Caco-2 (cell line): ENCODE measurements at regions of chr11 and their contacts with region 1.

Region 1: GRCh38 chr11:46554205-46555055 is 39.4 kb downstream of the AMBRA1 start:
- DNase-seq: peak; percentile 72 to 86
- H3K4me3 ChIP-seq: no peak overlapping the region
- H3K4me3 Mint-ChIP-seq: peak overlapping the region; percentile 74
- H3K27ac Mint-ChIP-seq: peak overlapping the region; percentile 77
- H3K4me1 ChIP-seq: peaks cover 47% of the 10 kb centered on the region
- H3K4me1 Mint-ChIP-seq: peaks cover 32% of the 10 kb centered on the region
- H3K27me3 ChIP-seq: no peaks in the 10 kb centered on the region
- H3K27me3 Mint-ChIP-seq: no peaks in the 10 kb centered on the region
- CTCF ChIP-seq: no peak

Region 2: DNA sequence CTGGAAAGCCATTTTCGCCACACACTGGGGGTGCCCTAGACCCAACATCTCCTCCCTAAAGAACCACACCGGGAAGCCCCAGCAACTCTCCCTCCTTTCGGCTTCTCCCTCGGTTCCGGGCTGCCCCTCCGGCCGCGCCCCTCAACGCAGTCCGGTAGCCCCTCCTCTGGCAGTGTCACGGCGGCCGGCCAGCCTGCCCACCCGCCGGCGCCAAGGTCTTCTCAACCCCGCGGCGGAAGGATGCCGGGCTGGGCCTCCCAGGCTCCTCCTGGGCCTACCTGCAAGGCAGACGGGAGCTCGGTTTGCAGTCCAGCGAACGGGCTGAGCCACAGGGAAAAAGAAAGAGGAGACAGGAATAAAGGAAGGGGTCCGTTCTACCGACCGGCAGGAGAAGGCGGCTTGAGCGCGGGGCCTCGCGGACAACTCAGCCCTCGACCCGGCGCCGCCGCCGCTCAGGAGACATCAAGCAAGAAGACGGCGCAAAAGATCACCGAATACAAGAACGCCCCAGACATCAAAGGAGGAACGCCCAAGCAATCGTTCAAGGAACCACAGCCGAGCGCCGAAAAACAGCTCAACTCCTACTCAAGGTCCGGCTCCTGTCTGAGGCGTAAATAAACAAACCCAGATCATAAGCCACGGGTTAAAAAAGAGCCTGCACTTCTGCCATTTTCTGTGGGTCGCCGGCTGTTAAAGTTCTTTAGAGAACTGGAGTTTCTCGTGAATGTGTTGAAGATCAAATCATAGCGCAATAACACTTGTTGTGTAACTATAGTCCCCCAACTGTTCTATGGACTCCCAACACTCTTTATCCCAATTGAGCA is 39.3 kb after region 1 on chr11 and contains the start of gene AMBRA1:
- CTCF ChIA-PET with region 1: no interaction called
- POLR2A ChIA-PET with region 1: interaction called, 11 read pairs
- intact Hi-C with region 1: loop called (anchors 1 kb)
- DNase-seq: peak; percentile 93
- H3K4me3 ChIP-seq: peak within 1 kb of the TSS; percentile 79
- H3K4me3 Mint-ChIP-seq: peak within 1 kb of the TSS; percentile 96
- H3K27ac Mint-ChIP-seq: peak within 1 kb of the TSS; percentile 91
- H3K4me1 ChIP-seq: peaks cover 42% of the 10 kb centered on the region
- H3K4me1 Mint-ChIP-seq: peaks cover 24% of the 10 kb centered on the region
- H3K27me3 ChIP-seq: no peaks in the 10 kb centered on the region
- H3K27me3 Mint-ChIP-seq: no peaks in the 10 kb centered on the region
- CTCF ChIP-seq: no peak
- total RNA-seq, gene AMBRA1: 48.1 and 51.5 TPM in 2 replicates

Region 3: GRCh38 chr11:46616998-46617675 is 62.7 kb after region 1 on chr11 and contains the starts of genes ATG13 and HARBI1:
- CTCF ChIA-PET with region 1: interaction called, 6 read pairs
- POLR2A ChIA-PET with region 1: interaction called, 22 read pairs
- intact Hi-C with region 1: loop called (anchors 1 kb)
- DNase-seq: peak; percentile 92 to 96
- H3K4me3 ChIP-seq: peak within 1 kb of the TSS; percentile 96
- H3K4me3 Mint-ChIP-seq: peak within 1 kb of the TSS; percentile 90
- H3K27ac Mint-ChIP-seq: peak within 1 kb of the TSS; percentile 97
- H3K4me1 ChIP-seq: peaks cover 11% of the 10 kb centered on the region
- H3K4me1 Mint-ChIP-seq: peaks cover 18% of the 10 kb centered on the region
- H3K27me3 ChIP-seq: no peaks in the 10 kb centered on the region
- H3K27me3 Mint-ChIP-seq: no peaks in the 10 kb centered on the region
- CTCF ChIP-seq: no peak
- total RNA-seq, gene ATG13: 75.9 and 101 TPM in 2 replicates
- total RNA-seq, gene HARBI1: 7.6 and 9.1 TPM in 2 replicates

Region 4: GRCh38 chr11:46718155-46719019 is 164.0 kb after region 1 on chr11:
- CTCF ChIA-PET with region 1: no interaction called
- POLR2A ChIA-PET with region 1: no interaction called
- intact Hi-C with region 1: loop called (anchors 5 kb)
- DNase-seq: peak; percentile 75 to 89
- H3K4me3 ChIP-seq: no peak overlapping the region
- H3K4me3 Mint-ChIP-seq: peak overlapping the region; percentile 68
- H3K27ac Mint-ChIP-seq: peak overlapping the region; percentile 92
- H3K4me1 ChIP-seq: peaks cover 34% of the 10 kb centered on the region
- H3K4me1 Mint-ChIP-seq: peaks cover 11% of the 10 kb centered on the region
- H3K27me3 ChIP-seq: no peaks in the 10 kb centered on the region
- H3K27me3 Mint-ChIP-seq: no peaks in the 10 kb centered on the region
- CTCF ChIP-seq: no peak